CD4-positive, alpha-beta T cell (primary cell): ENCODE measurements at regions of chr2 and their contacts with region 1.

Region 1: DNA sequence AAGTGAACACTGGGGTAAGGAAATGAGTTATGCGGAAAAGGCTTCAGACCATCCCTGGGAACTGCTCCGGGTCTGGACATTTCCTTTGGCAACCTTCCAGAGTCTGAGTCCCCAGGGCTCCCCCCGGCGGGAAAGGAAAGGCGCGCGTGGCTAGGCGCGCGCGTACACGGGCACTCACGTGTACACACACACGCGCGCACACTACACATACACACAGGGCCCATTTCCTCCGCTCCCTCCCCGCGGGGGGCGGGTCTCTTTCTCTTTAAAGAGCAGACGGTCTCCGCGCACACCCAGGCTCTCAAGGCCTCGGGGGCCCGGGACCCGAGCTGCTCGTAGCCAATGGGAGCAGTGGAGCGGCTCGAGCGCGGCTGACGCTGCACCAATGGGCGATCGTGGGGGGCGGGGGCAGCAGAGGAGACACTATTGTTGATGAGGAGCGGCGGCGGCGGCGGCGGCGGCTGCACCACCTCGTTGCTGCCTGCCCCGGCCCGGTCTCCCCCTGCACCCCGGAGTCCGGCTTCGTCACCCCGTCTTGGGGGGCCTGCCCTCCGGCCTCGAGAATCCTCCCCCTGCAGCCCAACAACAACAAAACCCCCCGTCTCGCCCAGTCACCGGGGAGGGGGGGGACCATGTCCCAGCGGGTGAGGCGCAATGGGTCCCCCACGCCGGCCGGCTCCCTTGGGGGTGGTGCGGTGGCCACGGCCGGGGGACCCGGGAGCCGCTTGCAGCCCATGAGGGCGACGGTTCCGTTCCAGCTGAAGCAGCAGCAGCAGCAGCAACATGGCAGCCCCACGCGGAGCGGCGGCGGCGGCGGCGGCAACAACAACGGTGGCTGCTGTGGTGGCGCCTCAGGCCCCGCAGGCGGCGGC is at the start of gene FAM117B:
- DNase-seq: peak; percentile 97 to 99 (median 98)
- ATAC-seq: peak; percentile 87
- H3K4me3 ChIP-seq: peak within 1 kb of the TSS; percentile 86
- H3K4me3 Mint-ChIP-seq: peak within 1 kb of the TSS; percentile 95
- H3K27ac ChIP-seq: peak within 1 kb of the TSS; percentile 89 to 96
- H3K27ac Mint-ChIP-seq: peak within 1 kb of the TSS; percentile 98
- H3K4me1 ChIP-seq: peaks cover 34% of the 10 kb centered on the region
- H3K4me1 Mint-ChIP-seq: peaks cover 56% of the 10 kb centered on the region
- H3K27me3 ChIP-seq: no peaks in the 10 kb centered on the region
- H3K27me3 Mint-ChIP-seq: no peaks in the 10 kb centered on the region
- CTCF ChIP-seq: no peak
- total RNA-seq, gene FAM117B: 46.8 to 50.4 TPM

Region 2: DNA sequence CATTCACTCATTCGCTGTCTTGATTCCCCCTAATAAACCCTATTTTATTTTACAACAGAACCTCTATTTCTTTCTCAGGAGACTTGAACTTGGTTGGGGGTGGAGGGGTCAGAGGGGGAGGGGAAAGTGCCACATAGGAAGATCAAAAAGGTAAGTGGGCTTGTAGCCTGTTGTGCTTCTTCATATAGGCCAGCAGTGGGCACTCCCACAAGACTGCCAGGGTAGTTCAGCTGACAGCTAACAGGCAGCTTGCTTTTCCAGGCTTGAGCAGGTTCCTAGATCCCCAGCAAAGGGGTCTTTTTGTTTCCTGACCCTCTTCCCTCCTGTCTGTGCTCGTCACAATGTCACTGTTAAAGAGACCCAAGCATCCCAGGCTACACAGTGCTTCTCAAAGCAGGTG is 562.6 kb before region 1 on chr2:
- CTCF ChIA-PET with region 1: no interaction called
- POLR2A ChIA-PET with region 1: no interaction called
- intact Hi-C with region 1: no loop called
- DNase-seq: no peak
- ATAC-seq: no peak
- H3K4me3 ChIP-seq: no peak overlapping the region
- H3K4me3 Mint-ChIP-seq: no peak overlapping the region
- H3K27ac ChIP-seq: no peak overlapping the region
- H3K27ac Mint-ChIP-seq: no peak overlapping the region
- H3K4me1 ChIP-seq: no peaks in the 10 kb centered on the region
- H3K4me1 Mint-ChIP-seq: no peaks in the 10 kb centered on the region
- H3K27me3 ChIP-seq: no peaks in the 10 kb centered on the region
- H3K27me3 Mint-ChIP-seq: peaks cover 4% of the 10 kb centered on the region
- CTCF ChIP-seq: no peak

Region 3: DNA sequence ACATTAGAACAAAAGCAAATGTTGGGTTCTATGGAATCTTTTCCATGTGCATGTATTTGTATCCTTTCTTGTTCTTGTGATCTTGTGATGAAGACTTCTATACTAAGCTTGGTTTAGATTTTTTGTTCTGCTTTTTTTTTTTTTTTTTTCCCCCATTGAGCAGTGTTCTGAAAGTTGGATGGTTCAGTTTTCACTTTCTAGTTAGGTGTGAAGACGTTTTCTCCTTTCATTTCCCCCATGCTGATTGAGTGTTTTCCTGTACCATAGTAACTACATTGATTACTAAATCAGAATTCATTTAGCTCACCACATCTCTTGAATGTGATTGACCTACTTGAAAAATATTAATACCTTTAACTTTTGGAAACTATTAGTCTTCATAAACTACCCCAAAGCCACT is 335.1 kb before region 1 on chr2:
- CTCF ChIA-PET with region 1: no interaction called
- POLR2A ChIA-PET with region 1: no interaction called
- intact Hi-C with region 1: no loop called
- DNase-seq: no peak
- ATAC-seq: no peak
- H3K4me3 ChIP-seq: no peak overlapping the region
- H3K4me3 Mint-ChIP-seq: no peak overlapping the region
- H3K27ac ChIP-seq: no peak overlapping the region
- H3K27ac Mint-ChIP-seq: no peak overlapping the region
- H3K4me1 ChIP-seq: no peaks in the 10 kb centered on the region
- H3K4me1 Mint-ChIP-seq: no peaks in the 10 kb centered on the region
- H3K27me3 ChIP-seq: no peaks in the 10 kb centered on the region
- H3K27me3 Mint-ChIP-seq: no peaks in the 10 kb centered on the region
- CTCF ChIP-seq: no peak

Region 4: DNA sequence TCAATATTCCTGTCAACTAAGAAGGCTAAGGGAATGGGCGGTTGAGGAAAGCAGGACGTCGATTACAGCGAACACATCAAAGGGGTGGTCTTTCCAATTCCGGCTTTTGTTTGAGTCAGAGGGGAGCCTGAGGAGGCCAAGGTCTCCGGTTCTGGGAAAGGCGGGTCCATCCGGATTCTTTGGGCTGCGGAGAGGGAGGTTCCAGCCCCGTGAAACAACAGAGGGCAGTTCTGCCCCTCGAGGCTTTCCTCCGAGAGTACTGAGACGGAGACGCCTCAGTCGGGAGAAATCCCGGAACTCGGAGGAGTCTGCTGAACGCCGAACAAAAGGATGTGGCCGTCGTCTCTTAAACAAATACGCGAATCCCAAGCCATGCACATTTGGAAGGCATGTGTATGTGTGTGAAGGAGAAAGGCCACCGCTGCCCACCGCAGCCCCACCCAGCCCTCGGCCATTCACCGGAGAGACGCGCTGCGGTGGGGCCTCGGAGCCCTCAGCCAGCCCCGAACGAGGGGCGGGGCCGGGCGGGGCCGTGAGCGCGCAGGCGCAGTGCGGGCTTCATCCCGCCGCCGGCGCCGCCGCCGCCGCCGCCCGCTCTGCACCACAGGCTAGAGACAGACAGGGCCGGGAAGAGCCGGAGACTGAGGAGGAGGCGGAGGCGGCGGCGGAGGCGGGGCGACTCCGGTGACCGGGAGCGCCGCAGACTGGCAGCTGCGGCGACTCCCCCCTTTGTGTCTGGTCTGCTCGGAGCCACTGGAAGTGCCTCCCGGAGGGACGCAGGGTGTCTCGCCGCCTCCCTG is 259.0 kb before region 1 on chr2 and contains the start of gene BMPR2:
- CTCF ChIA-PET with region 1: no interaction called
- POLR2A ChIA-PET with region 1: no interaction called
- intact Hi-C with region 1: loop called in 1 of 2 experiments (anchors 10 kb)
- DNase-seq: peak; percentile 65 to 92 (median 80)
- ATAC-seq: peak; percentile 72
- H3K4me3 ChIP-seq: peak within 1 kb of the TSS; percentile 79
- H3K4me3 Mint-ChIP-seq: peak within 1 kb of the TSS; percentile 100
- H3K27ac ChIP-seq: peak within 1 kb of the TSS; percentile 21 to 37
- H3K27ac Mint-ChIP-seq: peak within 1 kb of the TSS; percentile 87
- H3K4me1 ChIP-seq: peaks cover 20% of the 10 kb centered on the region
- H3K4me1 Mint-ChIP-seq: peaks cover 31% of the 10 kb centered on the region
- H3K27me3 ChIP-seq: no peaks in the 10 kb centered on the region
- H3K27me3 Mint-ChIP-seq: no peaks in the 10 kb centered on the region
- CTCF ChIP-seq: no peak
- total RNA-seq, gene BMPR2: 12.7 to 12.8 TPM

Region 5: DNA sequence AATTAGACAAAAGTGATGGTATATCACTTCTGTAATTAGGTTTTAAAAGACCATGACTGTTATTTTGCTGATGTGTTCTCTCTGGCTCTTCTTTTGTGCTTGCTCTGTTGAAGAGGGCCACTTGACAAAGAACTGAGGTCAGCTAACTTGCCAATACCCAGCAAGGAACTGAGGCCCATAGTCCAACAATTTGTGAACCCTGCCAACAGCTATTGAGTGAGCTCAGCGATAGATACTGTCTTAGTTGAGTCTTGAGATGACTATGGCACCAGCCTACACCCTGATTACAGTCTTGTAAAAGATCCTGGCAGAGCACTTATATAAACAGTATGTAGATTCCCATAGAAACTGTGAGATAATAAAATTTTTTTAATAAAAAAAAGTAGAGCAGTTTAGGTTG is 155.7 kb before region 1 on chr2:
- CTCF ChIA-PET with region 1: no interaction called
- POLR2A ChIA-PET with region 1: no interaction called
- intact Hi-C with region 1: no loop called
- DNase-seq: no peak
- ATAC-seq: no peak
- H3K4me3 ChIP-seq: no peak overlapping the region
- H3K4me3 Mint-ChIP-seq: no peak overlapping the region
- H3K27ac ChIP-seq: no peak overlapping the region
- H3K27ac Mint-ChIP-seq: no peak overlapping the region
- H3K4me1 ChIP-seq: no peaks in the 10 kb centered on the region
- H3K4me1 Mint-ChIP-seq: no peaks in the 10 kb centered on the region
- H3K27me3 ChIP-seq: no peaks in the 10 kb centered on the region
- H3K27me3 Mint-ChIP-seq: no peaks in the 10 kb centered on the region
- CTCF ChIP-seq: no peak

Region 6: DNA sequence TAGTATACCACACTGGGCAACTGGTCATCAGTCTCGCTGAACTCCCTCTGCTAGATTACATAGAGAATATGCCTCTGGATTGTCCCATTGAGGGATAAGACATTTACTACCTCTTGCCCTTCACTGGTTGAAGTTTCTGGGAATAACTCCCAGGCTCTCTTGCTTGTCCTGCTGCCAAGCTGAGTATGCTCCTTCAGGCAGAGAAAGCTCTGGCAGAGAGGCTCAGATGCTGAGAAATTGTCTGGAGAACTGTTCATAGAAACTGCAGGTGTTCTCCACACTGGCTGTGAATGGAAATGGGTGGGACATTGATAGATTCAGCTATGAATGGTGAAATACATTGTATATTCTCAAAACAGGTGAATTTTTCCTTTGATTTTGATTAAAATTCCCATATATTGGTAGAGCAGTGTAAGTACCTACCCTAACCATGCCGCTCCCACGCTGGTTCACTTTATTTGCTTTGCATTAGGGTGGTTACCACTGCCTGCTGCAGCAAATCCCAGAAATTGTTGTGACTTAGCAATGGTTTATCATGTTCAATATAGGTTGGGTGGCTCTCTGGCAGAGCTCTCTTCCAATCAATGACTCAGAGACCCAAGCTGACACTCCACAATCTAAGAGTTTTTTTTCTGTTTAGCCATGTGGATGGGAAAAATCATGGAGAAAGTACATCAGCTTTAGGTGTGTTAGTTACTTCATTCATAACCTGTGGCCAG is 36.7 kb after region 1 on chr2:
- CTCF ChIA-PET with region 1: no interaction called
- POLR2A ChIA-PET with region 1: interaction called, 38 read pairs
- intact Hi-C with region 1: loop called in 1 of 2 experiments (anchors 5 kb)
- DNase-seq: no peak
- ATAC-seq: no peak
- H3K4me3 ChIP-seq: no peak overlapping the region
- H3K4me3 Mint-ChIP-seq: peak overlapping the region; percentile 34
- H3K27ac ChIP-seq: no peak overlapping the region
- H3K27ac Mint-ChIP-seq: peak overlapping the region; percentile 39
- H3K4me1 ChIP-seq: peaks cover 39% of the 10 kb centered on the region
- H3K4me1 Mint-ChIP-seq: peaks cover 81% of the 10 kb centered on the region
- H3K27me3 ChIP-seq: no peaks in the 10 kb centered on the region
- H3K27me3 Mint-ChIP-seq: no peaks in the 10 kb centered on the region
- CTCF ChIP-seq: no peak

Region 7: GRCh38 chr2:202718614-202719013 is 83.8 kb after region 1 on chr2:
- CTCF ChIA-PET with region 1: no interaction called
- POLR2A ChIA-PET with region 1: interaction called, 17 read pairs
- intact Hi-C with region 1: no loop called
- DNase-seq: no peak
- ATAC-seq: no peak
- H3K4me3 ChIP-seq: no peak overlapping the region
- H3K4me3 Mint-ChIP-seq: no peak overlapping the region
- H3K27ac ChIP-seq: no peak overlapping the region
- H3K27ac Mint-ChIP-seq: peak overlapping the region; percentile 15
- H3K4me1 ChIP-seq: peaks cover 7% of the 10 kb centered on the region
- H3K4me1 Mint-ChIP-seq: peaks cover 62% of the 10 kb centered on the region
- H3K27me3 ChIP-seq: no peaks in the 10 kb centered on the region
- H3K27me3 Mint-ChIP-seq: no peaks in the 10 kb centered on the region
- CTCF ChIP-seq: no peak

Region 8: DNA sequence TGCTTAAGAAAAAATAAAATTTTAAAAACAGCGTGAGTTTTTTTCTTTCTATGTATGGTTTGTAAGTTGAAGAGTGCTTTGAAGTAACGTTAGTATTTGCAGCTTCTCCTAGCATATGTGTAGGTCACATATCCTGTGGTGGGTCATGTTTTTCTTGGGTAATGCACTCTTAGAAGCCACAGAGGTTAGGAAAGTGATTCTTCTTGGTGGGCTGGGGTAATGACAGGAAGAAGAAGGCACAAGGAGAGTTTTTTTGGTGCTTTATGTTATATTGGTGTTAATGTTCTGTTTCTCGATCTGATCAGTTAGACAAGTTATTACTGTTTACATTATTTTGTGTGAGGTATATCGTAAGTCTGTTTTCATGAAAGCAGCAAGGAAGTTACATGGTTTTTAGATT is 127.8 kb after region 1 on chr2:
- CTCF ChIA-PET with region 1: no interaction called
- POLR2A ChIA-PET with region 1: interaction called, 32 read pairs
- intact Hi-C with region 1: loop called in 1 of 2 experiments (anchors 5 kb)
- DNase-seq: peak in 3 of 14 experiments; percentile 39 to 45 (median 40)
- ATAC-seq: peak; percentile 90
- H3K4me3 ChIP-seq: no peak overlapping the region
- H3K4me3 Mint-ChIP-seq: peak overlapping the region; percentile 52
- H3K27ac ChIP-seq: no peak overlapping the region
- H3K27ac Mint-ChIP-seq: peak overlapping the region; percentile 84
- H3K4me1 ChIP-seq: peaks cover 4% of the 10 kb centered on the region
- H3K4me1 Mint-ChIP-seq: peaks cover 59% of the 10 kb centered on the region
- H3K27me3 ChIP-seq: no peaks in the 10 kb centered on the region
- H3K27me3 Mint-ChIP-seq: no peaks in the 10 kb centered on the region
- CTCF ChIP-seq: no peak

Region 9: GRCh38 chr2:202911512-202912341 is 276.9 kb after region 1 on chr2 and contains the starts of genes CARF and WDR12:
- CTCF ChIA-PET with region 1: no interaction called
- POLR2A ChIA-PET with region 1: interaction called, 27 read pairs
- intact Hi-C with region 1: loop called (anchors 2 to 5 kb)
- DNase-seq: peak; percentile 80 to 95 (median 86)
- ATAC-seq: peak; percentile 81
- H3K4me3 ChIP-seq: peak within 1 kb of the TSS; percentile 79
- H3K4me3 Mint-ChIP-seq: peak within 1 kb of the TSS; percentile 98
- H3K27ac ChIP-seq: peak within 1 kb of the TSS; percentile 72 to 85
- H3K27ac Mint-ChIP-seq: peak within 1 kb of the TSS; percentile 90
- H3K4me1 ChIP-seq: peaks cover 9% of the 10 kb centered on the region
- H3K4me1 Mint-ChIP-seq: peaks cover 40% of the 10 kb centered on the region
- H3K27me3 ChIP-seq: no peaks in the 10 kb centered on the region
- H3K27me3 Mint-ChIP-seq: no peaks in the 10 kb centered on the region
- CTCF ChIP-seq: no peak
- total RNA-seq, gene CARF: 9.0 to 9.6 TPM
- total RNA-seq, gene WDR12: 6.2 to 7.7 TPM